Activated naive CD8-positive, alpha-beta T cell treated with anti-CD3 and anti-CD28 coated beads, Interleukin-2, amount 10 ng/mL, durations not matched to agents 7 days and 5 days (primary cell): ENCODE measurements at regions of chr22 and their contacts with region 1.

Region 1: DNA sequence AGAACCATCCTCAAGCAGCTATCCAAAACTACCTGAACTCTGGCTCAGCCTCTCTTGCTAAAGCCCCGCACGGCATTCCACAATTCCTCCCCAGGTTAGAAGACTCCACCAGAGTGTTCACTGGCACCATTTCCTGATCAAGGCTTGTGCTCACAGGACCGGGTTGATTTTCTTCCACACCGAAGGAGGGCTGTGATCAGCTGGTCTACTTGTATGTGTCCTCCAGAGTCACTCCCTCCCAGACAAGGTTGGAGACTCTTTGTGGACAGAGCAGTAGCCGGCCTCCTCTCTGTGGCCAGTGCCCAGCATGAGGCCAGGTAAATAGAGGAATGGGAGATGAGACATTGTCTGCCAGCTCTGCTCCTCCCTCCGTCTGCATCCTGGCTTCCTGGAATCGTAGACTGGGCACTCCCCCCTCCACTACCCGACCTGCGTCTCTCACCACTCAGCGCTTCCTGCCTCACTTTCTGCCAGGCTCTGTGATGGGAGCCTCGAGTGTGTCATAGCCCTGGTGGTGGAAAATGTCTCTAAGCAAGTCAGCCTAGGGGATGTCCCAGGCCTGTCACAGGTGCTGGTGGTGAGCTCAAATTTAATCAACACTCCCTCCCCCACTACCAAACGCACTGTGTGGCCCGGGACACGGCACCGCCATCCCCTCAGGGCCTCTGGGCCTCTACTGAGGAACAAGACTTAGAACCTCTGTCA is 12.5 kb upstream of the TMPRSS6 start:
- DNase-seq: peak; percentile 82
- ATAC-seq: peak; percentile 98
- H3K4me3 Mint-ChIP-seq: peak overlapping the region; percentile 85
- H3K27ac Mint-ChIP-seq: peak overlapping the region; percentile 98
- H3K4me1 Mint-ChIP-seq: peaks cover 64% of the 10 kb centered on the region
- H3K27me3 Mint-ChIP-seq: no peaks in the 10 kb centered on the region

Region 2: DNA sequence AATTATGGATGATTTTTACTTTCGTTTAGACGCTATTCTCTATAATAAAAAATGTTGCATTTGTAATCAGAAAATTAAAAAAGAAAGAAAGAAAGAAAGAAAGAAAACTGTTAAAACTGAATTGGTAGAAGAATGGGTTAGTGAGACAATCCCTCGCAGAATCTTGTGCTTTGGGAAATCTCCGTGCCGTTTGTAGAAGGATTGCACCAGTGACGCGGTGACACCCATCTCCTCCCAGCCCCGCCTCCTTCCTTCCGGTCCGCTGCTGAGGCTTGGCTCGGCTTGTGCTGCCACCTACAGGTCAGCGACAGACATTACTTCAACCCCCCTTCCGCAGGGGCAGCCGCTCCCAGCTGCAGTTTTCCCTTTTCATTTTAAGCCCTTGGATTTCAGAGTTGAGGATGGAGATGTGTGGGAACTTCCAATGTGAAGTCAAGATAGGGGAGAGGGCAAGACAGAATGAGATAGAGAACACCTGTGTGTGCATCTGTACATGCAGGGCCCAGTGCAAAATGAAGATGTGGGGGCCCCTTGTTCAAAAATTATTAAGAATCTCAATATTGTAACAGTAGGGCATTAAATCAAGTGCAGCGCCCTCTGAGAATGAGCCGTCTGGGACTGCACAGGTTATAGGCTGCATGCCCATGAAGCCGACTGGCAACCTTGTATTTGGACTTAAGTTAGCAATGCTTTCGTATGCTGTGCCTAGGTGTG is 143.9 kb before region 1 on chr22:
- POLR2A ChIA-PET with region 1: no interaction called
- DNase-seq: peak; percentile 90
- ATAC-seq: peak; percentile 79
- H3K4me3 Mint-ChIP-seq: peak overlapping the region; percentile 89
- H3K27ac Mint-ChIP-seq: peak overlapping the region; percentile 94
- H3K4me1 Mint-ChIP-seq: peaks cover 10% of the 10 kb centered on the region
- H3K27me3 Mint-ChIP-seq: peaks cover 18% of the 10 kb centered on the region

Region 3: DNA sequence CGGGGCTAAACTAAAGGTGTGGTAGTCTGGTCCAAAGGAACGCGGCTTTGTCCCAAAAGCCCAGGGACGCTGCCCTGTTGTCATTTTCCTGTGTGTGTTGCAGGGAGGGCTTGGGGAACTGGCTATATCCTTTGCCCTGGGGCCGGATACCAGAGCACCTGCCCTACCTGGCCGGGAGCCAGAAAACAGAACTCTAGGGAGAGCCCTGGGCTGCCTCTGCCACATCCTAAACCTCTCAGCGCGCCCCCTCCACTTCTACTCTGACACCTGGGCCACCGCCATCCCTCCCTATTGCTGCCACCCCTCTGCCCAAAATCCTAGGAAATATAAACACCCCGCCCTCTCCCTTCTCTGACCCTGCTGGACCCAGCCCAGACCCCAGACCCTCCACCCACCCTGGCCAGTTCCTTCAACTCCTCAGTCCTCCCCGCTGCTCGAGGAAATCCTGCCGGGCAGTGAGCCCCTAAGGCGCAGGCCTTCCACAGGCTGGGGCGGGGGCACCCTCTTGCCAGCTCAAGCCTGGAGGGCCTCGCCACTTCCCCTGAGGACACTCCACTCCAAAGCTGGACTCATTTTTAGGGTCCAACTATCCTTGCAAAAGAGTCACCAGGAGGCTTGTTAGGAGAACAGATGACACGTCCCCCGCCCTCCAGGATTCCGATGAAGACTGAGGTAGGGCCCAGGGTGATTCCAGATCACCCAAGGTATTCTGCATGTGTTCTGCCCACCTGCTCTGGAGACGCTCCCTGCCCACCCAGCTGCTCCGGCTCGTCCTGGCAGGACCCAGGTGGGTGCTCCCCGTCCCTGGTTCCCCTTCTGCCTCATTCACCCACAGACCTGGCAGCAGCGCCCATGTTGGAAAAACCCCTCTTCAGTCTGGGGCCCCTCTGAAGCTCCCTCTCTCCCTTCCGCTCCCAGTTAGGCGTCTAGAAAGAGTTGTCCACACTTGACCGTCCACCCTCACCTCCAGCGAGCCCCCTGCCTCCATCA is 58.3 kb before region 1 on chr22:
- POLR2A ChIA-PET with region 1: no interaction called
- DNase-seq: no peak
- ATAC-seq: no peak
- H3K4me3 Mint-ChIP-seq: no peak overlapping the region
- H3K27ac Mint-ChIP-seq: peak overlapping the region; percentile 30
- H3K4me1 Mint-ChIP-seq: peaks cover 18% of the 10 kb centered on the region
- H3K27me3 Mint-ChIP-seq: peaks cover 8% of the 10 kb centered on the region

Region 4: GRCh38 chr22:37077884-37078485 is 44.1 kb before region 1 on chr22:
- POLR2A ChIA-PET with region 1: interaction called, 114 read pairs
- DNase-seq: peak; percentile 94
- ATAC-seq: peak; percentile 17
- H3K4me3 Mint-ChIP-seq: peak overlapping the region; percentile 85
- H3K27ac Mint-ChIP-seq: peak overlapping the region; percentile 100
- H3K4me1 Mint-ChIP-seq: peaks cover 47% of the 10 kb centered on the region
- H3K27me3 Mint-ChIP-seq: no peaks in the 10 kb centered on the region

Region 5: DNA sequence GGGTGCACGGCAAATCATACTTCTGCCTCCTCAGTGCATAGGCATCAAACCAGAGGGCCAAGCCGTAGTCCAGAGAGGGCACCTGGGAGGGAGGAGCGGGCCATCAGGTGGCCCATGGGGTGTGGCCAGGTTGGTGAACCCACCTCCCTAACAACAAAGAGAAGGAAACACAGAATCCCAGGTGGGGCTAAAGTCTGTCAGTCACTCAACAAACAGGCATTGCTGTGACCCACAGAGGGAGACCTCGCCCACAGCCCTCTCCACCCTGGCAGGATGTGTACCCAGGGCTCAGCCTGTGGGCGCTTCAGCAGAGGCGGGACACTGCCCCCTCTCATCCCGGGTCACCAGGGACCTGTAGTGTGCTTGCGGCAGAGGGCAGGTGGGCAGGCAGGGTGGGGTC is 37.7 kb before region 1 on chr22:
- POLR2A ChIA-PET with region 1: interaction called, 114 read pairs
- DNase-seq: no peak
- ATAC-seq: no peak
- H3K4me3 Mint-ChIP-seq: no peak overlapping the region
- H3K27ac Mint-ChIP-seq: peak overlapping the region; percentile 80
- H3K4me1 Mint-ChIP-seq: peaks cover 46% of the 10 kb centered on the region
- H3K27me3 Mint-ChIP-seq: no peaks in the 10 kb centered on the region